Mammary epithelial cell (primary cell): ENCODE measurements at regions of chr2 and their contacts with region 1.

Region 1: GRCh38 chr2:167212014-167212648 is 323.9 kb downstream of the XIRP2 start:
- DNase-seq: peak; percentile 32
- H3K4me3 ChIP-seq: no peak overlapping the region
- H3K27ac ChIP-seq: no peak overlapping the region
- H3K4me1 ChIP-seq: no peaks in the 10 kb centered on the region
- H3K27me3 ChIP-seq: no peaks in the 10 kb centered on the region
- CTCF ChIP-seq: peak; percentile 77 to 80

Region 2: DNA sequence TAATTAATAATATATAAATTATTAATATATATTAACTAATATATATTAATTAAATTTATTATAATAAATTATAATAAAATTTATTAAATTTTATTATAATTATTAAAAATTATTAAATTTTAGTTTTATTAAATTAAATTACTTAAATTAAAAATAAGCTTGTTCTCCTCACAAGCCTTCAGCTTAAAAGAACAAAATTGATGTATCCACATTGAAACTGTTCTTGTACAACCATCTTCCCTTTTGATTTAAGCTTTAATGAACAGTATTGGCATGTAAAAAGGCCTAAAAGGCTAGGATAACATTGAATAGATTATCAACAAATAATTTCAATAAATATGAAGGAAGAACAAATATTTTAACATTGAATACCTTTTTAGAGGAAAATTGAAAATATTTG is 386.2 kb before region 1 on chr2:
- CTCF ChIA-PET with region 1: no interaction called
- dilution Hi-C with region 1: no loop called
- in situ Hi-C with region 1: no loop called
- intact Hi-C with region 1: loop called (anchors 5 kb)
- DNase-seq: no peak
- H3K4me3 ChIP-seq: no peak overlapping the region
- H3K27ac ChIP-seq: no peak overlapping the region
- H3K4me1 ChIP-seq: no peaks in the 10 kb centered on the region
- H3K27me3 ChIP-seq: no peaks in the 10 kb centered on the region
- CTCF ChIP-seq: no peak

Region 3: GRCh38 chr2:167127135-167127534 is 85.0 kb before region 1 on chr2:
- CTCF ChIA-PET with region 1: interaction called, 7 read pairs
- dilution Hi-C with region 1: no loop called
- in situ Hi-C with region 1: loop called in 1 of 2 experiments (anchors 5 kb)
- intact Hi-C with region 1: loop called (anchors 1 kb)
- DNase-seq: peak; percentile 30
- H3K4me3 ChIP-seq: no peak overlapping the region
- H3K27ac ChIP-seq: no peak overlapping the region
- H3K4me1 ChIP-seq: no peaks in the 10 kb centered on the region
- H3K27me3 ChIP-seq: no peaks in the 10 kb centered on the region
- CTCF ChIP-seq: peak; percentile 36 to 49

Region 4: DNA sequence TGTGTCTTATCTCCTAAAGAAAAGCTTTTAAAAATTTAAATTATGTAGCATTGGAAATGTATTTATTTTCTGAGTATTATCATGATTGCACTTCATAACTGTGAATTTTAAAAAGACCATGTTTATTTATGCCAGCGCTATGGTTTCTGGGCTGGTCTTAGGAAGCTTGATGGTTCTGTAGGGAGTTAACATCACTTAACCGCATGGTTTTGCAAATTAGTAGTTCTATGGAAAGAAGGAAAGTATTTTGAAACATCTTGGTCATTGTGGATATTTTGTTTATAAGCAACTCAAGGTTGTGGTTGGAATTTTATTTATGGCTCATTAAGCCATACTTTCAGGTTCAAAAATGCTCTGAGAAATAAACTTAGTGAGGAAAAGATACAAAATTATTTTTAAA is 485.8 kb after region 1 on chr2:
- CTCF ChIA-PET with region 1: no interaction called
- dilution Hi-C with region 1: no loop called
- in situ Hi-C with region 1: no loop called
- intact Hi-C with region 1: no loop called
- DNase-seq: no peak
- H3K4me3 ChIP-seq: no peak overlapping the region
- H3K27ac ChIP-seq: no peak overlapping the region
- H3K4me1 ChIP-seq: no peaks in the 10 kb centered on the region
- H3K27me3 ChIP-seq: no peaks in the 10 kb centered on the region
- CTCF ChIP-seq: no peak